Left ventricle myocardium inferior (tissue), 1 donor: ENCODE measurements at regions of chr4 and their contacts with region 1.

Region 1: DNA sequence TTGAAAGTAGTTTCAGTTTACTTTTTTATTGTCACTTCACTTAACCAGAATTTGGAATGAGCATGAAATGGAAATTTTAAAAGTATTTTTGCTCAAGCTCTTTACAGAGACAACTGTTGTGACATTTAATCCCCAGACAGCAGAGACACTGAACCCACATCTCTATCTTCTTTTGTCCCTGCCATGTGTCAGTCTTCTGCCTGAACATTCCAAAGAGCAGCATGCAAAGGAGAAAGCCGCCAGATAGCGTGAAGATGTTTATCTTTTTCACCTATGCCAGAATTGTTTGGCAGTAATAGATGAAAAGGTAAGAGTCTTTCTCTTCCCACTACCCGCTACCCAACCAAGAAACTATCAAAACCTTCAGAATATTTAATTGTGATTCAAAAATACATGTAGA is 46.8 kb downstream of the NDNF start:
- DNase-seq: no peak
- H3K4me3 ChIP-seq: no peak overlapping the region
- H3K27ac ChIP-seq: no peak overlapping the region
- H3K4me1 ChIP-seq: no peaks in the 10 kb centered on the region
- H3K27me3 ChIP-seq: no peaks in the 10 kb centered on the region
- CTCF ChIP-seq: no peak

Region 2: GRCh38 chr4:121088867-121089266 is 63.3 kb after region 1 on chr4:
- intact Hi-C with region 1: loop called (anchors 10 kb)
- DNase-seq: no peak
- H3K4me3 ChIP-seq: no peak overlapping the region
- H3K27ac ChIP-seq: no peak overlapping the region
- H3K4me1 ChIP-seq: no peaks in the 10 kb centered on the region
- H3K27me3 ChIP-seq: no peaks in the 10 kb centered on the region
- CTCF ChIP-seq: no peak